GM12878 (cell line): ENCODE measurements at regions of chr10 and their contacts with region 1.

Region 1: GRCh38 chr10:116787893-116788665 is 45.7 kb upstream of the HSPA12A start:
- DNase-seq: no peak
- ATAC-seq: peak; percentile 91
- H3K4me3 ChIP-seq: no peak overlapping the region
- H3K27ac ChIP-seq: no peak overlapping the region
- H3K4me1 ChIP-seq: peaks cover 3% of the 10 kb centered on the region; the same call in 1 of the 2 replicates
- H3K27me3 ChIP-seq: no peaks in the 10 kb centered on the region
- CTCF ChIP-seq: peak; percentile 76 to 97 (median 93)
- EP300 ChIP-seq: no peak
- POLR2A ChIP-seq: no peak
- RAD21 ChIP-seq: peak; percentile 46

Region 2: GRCh38 chr10:116608686-116609594 is 179.1 kb before region 1 on chr10:
- CTCF ChIA-PET with region 1: no interaction called
- POLR2A ChIA-PET with region 1: no interaction called
- RAD21 ChIA-PET with region 1: no interaction called
- SMC1A ChIA-PET with region 1: no interaction called
- in situ Hi-C with region 1: no loop called
- intact Hi-C with region 1: no loop called
- DNase-seq: no peak
- ATAC-seq: no peak
- H3K4me3 ChIP-seq: no peak overlapping the region
- H3K27ac ChIP-seq: no peak overlapping the region
- H3K4me1 ChIP-seq: no peaks in the 10 kb centered on the region
- H3K27me3 ChIP-seq: no peaks in the 10 kb centered on the region
- CTCF ChIP-seq: no peak
- EP300 ChIP-seq: no peak
- POLR2A ChIP-seq: no peak
- RAD21 ChIP-seq: no peak

Region 3: DNA sequence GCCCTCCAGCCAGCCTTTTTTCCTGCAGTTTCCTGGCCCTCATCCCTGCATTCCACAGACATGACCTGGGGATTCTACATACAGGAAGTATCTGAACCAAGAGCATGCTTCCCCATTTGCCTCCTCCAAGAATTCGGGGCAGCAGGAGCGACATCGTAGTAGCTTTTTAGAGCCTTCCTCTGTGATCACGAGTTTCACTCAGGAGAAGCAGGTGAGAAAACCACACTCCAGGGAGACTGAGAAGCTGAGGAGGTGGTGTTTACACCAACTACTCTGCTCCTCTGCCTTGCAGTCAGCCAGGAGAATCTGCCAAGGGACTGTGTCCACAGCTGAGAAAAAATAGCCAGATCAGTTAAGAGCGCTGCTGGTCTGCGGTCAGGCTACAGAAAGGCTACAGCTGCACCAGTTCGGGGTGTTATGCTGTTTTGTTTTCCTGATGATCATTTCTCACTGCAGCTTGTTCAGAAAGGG is 99.8 kb before region 1 on chr10:
- CTCF ChIA-PET with region 1: interaction called, 48 read pairs
- POLR2A ChIA-PET with region 1: no interaction called
- RAD21 ChIA-PET with region 1: interaction called, 5 read pairs
- SMC1A ChIA-PET with region 1: interaction called, 3 read pairs
- in situ Hi-C with region 1: loop called (anchors 10 kb)
- intact Hi-C with region 1: no loop called
- DNase-seq: no peak
- ATAC-seq: no peak
- H3K4me3 ChIP-seq: no peak overlapping the region
- H3K27ac ChIP-seq: no peak overlapping the region
- H3K4me1 ChIP-seq: no peaks in the 10 kb centered on the region
- H3K27me3 ChIP-seq: no peaks in the 10 kb centered on the region
- CTCF ChIP-seq: no peak
- EP300 ChIP-seq: no peak
- POLR2A ChIP-seq: no peak
- RAD21 ChIP-seq: no peak

Region 4: DNA sequence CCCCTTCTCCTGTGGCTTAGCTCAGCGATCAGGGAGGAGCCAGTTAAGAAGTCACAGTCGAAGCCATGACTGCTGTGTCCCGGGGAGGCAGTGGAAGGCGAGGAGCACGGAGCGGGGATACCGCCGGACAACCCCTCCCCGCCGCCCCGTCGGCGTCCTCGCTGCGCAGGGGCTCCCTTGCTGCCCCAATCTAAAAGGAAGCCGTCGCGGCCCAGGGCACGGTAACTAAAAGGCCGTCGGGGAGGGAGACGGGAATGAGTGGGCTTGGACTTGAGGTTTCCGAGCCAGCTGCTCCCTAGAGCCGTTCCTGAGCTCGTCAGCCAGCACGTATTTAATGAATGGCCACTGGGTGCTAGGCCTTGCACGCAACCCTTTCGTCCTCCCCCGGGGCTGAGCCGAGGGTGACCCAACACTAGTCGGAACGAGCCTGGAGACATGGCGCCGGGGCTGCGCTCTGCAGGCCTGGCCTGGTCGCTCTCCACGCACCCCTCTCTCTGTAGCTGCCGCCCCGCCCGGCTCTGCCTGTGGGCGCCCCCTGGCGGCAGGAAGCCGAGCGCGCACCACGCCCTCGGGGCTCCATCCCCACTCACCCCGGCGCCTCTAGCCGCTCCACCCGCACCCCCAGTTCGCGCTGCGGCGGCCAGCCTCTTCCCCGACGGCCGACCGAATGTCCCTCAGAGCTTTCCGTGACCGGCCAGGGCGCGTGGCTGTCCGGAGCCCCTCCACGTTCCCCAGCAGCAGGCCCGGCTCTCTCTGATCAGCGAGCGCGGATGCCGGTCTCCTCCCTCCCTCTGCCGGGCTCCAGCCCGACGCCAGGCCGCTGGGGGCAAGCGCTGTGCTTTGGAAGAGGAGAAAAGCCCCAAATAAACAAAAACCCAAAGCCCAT is 380.0 kb after region 1 on chr10:
- CTCF ChIA-PET with region 1: interaction called, 286 read pairs
- POLR2A ChIA-PET with region 1: no interaction called
- RAD21 ChIA-PET with region 1: interaction called, 5 read pairs
- SMC1A ChIA-PET with region 1: interaction called, 4 read pairs
- in situ Hi-C with region 1: no loop called
- intact Hi-C with region 1: no loop called
- DNase-seq: no peak
- ATAC-seq: peak; percentile 99
- H3K4me3 ChIP-seq: no peak overlapping the region
- H3K27ac ChIP-seq: no peak overlapping the region
- H3K4me1 ChIP-seq: no peaks in the 10 kb centered on the region
- H3K27me3 ChIP-seq: peaks cover 22 to 25% of the 10 kb centered on the region in 2 experiments
- CTCF ChIP-seq: peak; percentile 63 to 77 (median 66)
- EP300 ChIP-seq: no peak
- POLR2A ChIP-seq: no peak
- RAD21 ChIP-seq: peak; percentile 48

Region 5: GRCh38 chr10:117284716-117285494 is 496.8 kb after region 1 on chr10:
- CTCF ChIA-PET with region 1: no interaction called
- POLR2A ChIA-PET with region 1: no interaction called
- RAD21 ChIA-PET with region 1: no interaction called
- SMC1A ChIA-PET with region 1: no interaction called
- in situ Hi-C with region 1: no loop called
- intact Hi-C with region 1: no loop called
- DNase-seq: no peak
- ATAC-seq: no peak
- H3K4me3 ChIP-seq: no peak overlapping the region
- H3K27ac ChIP-seq: no peak overlapping the region
- H3K4me1 ChIP-seq: no peaks in the 10 kb centered on the region
- H3K27me3 ChIP-seq: no peaks in the 10 kb centered on the region
- CTCF ChIP-seq: no peak
- EP300 ChIP-seq: no peak
- POLR2A ChIP-seq: no peak
- RAD21 ChIP-seq: no peak